CD4-positive, alpha-beta memory T cell (primary cell): ENCODE measurements at regions of chr4 and their contacts with region 1.

Region 1: GRCh38 chr4:25986807-25987206 is 72.8 kb downstream of the SMIM20 start:
- DNase-seq: no peak
- H3K4me3 ChIP-seq: no peak overlapping the region
- H3K4me3 Mint-ChIP-seq: no peak overlapping the region
- H3K27ac ChIP-seq: no peak overlapping the region
- H3K27ac Mint-ChIP-seq: peak overlapping the region in 1 of 7 donors; percentile 48
- H3K4me1 ChIP-seq: peaks cover 6% of the 10 kb centered on the region
- H3K4me1 Mint-ChIP-seq: peaks cover 4 to 13% (median 6%) of the 10 kb centered on the region in 4 donors
- H3K27me3 ChIP-seq: no peaks in the 10 kb centered on the region
- H3K27me3 Mint-ChIP-seq: no peaks in the 10 kb centered on the region

Region 2: DNA sequence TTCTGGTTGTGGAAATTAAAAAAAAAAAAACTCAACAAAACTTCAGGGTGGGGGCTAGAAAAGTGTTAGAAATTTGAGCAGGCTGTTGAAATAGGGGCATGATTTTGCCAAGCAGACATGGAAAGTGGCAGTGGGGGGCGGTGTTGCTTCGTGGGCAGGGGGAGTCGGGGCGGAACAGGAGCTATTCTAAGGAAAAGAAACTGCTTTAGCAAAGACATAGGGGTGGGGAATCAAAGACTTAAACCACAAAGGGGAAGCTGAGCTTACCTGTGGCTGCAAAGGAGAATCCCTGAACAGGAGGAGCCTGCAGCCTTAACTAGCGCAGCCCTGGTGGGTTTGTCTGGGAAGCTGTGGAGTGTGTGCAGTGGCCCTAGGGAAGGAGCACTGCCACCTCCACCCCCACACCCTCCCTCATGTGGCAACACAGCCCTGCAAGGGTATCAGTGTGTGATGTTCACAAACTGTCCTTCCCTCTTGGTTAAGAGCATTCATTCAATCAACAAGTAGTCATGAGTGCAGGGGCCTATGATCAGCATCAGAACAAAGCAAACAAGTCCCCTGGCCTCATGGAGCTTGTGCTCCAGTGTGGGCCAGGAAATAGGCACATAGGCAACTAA is 144.5 kb before region 1 on chr4:
- CTCF ChIA-PET with region 1: interaction called, 27 read pairs
- POLR2A ChIA-PET with region 1: no interaction called
- intact Hi-C with region 1: loop called (anchors 1 kb)
- DNase-seq: peak in 3 of 5 donors; percentile 36 to 41 (median 41)
- H3K4me3 ChIP-seq: no peak overlapping the region
- H3K4me3 Mint-ChIP-seq: peak overlapping the region in 4 of 8 donors; percentile 18 to 63 (median 30)
- H3K27ac ChIP-seq: no peak overlapping the region
- H3K27ac Mint-ChIP-seq: peak overlapping the region in 6 of 7 donors; percentile 13 to 84 (median 48)
- H3K4me1 ChIP-seq: peaks cover 28% of the 10 kb centered on the region
- H3K4me1 Mint-ChIP-seq: peaks cover 33 to 74% (median 46%) of the 10 kb centered on the region in 4 donors
- H3K27me3 ChIP-seq: no peaks in the 10 kb centered on the region
- H3K27me3 Mint-ChIP-seq: no peaks in the 10 kb centered on the region

Region 3: GRCh38 chr4:25879991-25880651 is 106.7 kb before region 1 on chr4:
- CTCF ChIA-PET with region 1: no interaction called
- POLR2A ChIA-PET with region 1: no interaction called
- intact Hi-C with region 1: no loop called
- DNase-seq: no peak
- H3K4me3 ChIP-seq: no peak overlapping the region
- H3K4me3 Mint-ChIP-seq: no peak overlapping the region
- H3K27ac ChIP-seq: no peak overlapping the region
- H3K27ac Mint-ChIP-seq: no peak overlapping the region
- H3K4me1 ChIP-seq: no peaks in the 10 kb centered on the region
- H3K4me1 Mint-ChIP-seq: no peaks in the 10 kb centered on the region
- H3K27me3 ChIP-seq: no peaks in the 10 kb centered on the region
- H3K27me3 Mint-ChIP-seq: peaks cover 0 to 6% of the 10 kb centered on the region in 2 donors

Region 4: DNA sequence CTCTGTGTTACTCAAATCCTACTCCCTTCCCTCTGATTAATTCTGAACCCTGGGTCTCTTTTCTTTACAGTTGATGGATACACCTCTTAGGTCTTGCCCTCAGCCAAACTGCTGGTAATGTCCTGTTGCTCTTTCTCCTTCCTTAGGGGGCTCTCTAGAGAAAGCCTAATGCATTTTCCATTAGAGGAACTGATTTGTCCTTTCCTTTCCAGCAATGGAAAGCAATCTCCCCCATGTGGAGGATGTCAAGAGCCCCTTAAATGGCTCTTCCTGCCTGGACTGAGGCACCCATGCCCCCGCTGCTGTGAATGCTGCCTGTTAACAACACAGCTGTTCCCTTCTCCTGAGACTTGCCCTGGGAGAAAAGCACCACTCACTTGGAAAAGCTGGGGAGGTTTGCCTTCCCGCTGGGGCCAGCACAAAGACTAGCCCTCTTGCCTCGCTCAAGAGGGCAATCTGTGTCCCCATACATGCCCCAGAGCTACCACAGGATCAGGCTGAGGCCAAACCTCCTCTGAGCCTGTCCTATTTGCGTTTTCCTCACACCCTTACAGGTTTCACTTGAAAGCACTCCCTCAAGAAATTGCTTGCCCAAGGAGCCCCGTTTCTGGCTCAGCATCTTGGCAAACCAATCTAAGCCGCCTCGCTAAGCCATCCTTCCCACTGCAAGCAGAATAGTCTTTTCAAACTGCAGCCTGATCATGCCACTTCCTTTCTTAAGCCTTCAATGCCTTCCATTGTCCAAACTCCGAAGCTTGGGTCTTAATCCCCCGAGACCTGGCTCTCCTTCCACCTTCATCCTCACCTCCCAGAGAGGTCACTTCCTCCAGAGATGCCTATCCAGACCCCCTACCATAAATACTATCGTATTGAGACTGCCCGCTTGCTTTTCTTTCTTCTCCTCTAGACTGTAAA is 96.0 kb before region 1 on chr4:
- CTCF ChIA-PET with region 1: no interaction called
- POLR2A ChIA-PET with region 1: no interaction called
- intact Hi-C with region 1: no loop called
- DNase-seq: no peak
- H3K4me3 ChIP-seq: no peak overlapping the region
- H3K4me3 Mint-ChIP-seq: no peak overlapping the region
- H3K27ac ChIP-seq: no peak overlapping the region
- H3K27ac Mint-ChIP-seq: no peak overlapping the region
- H3K4me1 ChIP-seq: no peaks in the 10 kb centered on the region
- H3K4me1 Mint-ChIP-seq: peaks cover 0 to 4% (median 0%) of the 10 kb centered on the region in 4 donors
- H3K27me3 ChIP-seq: no peaks in the 10 kb centered on the region
- H3K27me3 Mint-ChIP-seq: no peaks in the 10 kb centered on the region

Region 5: GRCh38 chr4:26000274-26000950 is 13.6 kb after region 1 on chr4:
- CTCF ChIA-PET with region 1: interaction called, 38 read pairs
- POLR2A ChIA-PET with region 1: no interaction called
- intact Hi-C with region 1: no loop called
- DNase-seq: no peak
- H3K4me3 ChIP-seq: no peak overlapping the region
- H3K4me3 Mint-ChIP-seq: no peak overlapping the region
- H3K27ac ChIP-seq: no peak overlapping the region
- H3K27ac Mint-ChIP-seq: no peak overlapping the region
- H3K4me1 ChIP-seq: no peaks in the 10 kb centered on the region
- H3K4me1 Mint-ChIP-seq: no peaks in the 10 kb centered on the region
- H3K27me3 ChIP-seq: no peaks in the 10 kb centered on the region
- H3K27me3 Mint-ChIP-seq: peaks cover 2 to 5% of the 10 kb centered on the region in 2 donors